Ascending aorta (tissue), 2 donors: ENCODE measurements at regions of chr14 and their contacts with region 1.

Region 1: DNA sequence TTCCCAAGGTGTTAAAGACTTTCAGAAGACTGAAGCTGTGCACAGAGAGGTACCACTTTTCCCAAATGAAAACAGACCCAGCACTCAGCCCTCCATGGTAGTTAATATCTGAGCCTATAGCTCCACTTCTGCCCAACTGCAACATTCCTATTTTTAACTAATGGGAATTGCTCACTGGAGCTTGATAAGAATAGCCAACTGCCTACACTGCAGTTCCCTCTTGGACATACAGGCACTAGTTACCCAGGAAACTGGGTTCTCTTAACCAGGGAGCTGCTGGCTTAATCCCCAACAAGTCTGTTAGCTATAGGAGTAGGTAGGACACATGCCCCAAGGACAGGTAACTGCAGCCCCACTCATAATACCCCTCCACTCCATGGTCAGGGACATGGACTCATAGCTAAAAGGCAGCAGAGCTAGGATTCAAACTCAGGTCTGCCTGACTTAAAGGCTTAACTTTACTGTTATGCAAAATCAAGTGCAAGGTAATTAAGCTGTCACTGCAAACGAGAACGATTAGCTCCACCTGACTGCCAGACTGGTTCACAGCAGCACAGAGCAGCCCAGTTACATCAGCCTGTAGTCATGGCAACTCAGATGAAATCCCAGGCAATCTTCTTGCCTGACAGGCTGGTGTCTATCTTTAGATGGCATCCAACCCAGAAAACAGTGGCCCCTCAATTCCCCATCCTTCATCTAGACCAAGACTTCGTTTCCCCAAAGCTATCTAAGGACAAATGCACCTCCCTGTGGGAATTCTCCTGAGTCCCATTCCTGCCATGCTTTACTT is 77.1 kb upstream of the ACTN1 start:
- DNase-seq: no peak
- H3K4me3 ChIP-seq: no peak overlapping the region
- H3K27ac ChIP-seq: peak overlapping the region; percentile 69 to 92
- H3K4me1 ChIP-seq: peaks cover 6 to 42% of the 10 kb centered on the region in 2 donors
- H3K27me3 ChIP-seq: no peaks in the 10 kb centered on the region
- CTCF ChIP-seq: no peak

Region 2: DNA sequence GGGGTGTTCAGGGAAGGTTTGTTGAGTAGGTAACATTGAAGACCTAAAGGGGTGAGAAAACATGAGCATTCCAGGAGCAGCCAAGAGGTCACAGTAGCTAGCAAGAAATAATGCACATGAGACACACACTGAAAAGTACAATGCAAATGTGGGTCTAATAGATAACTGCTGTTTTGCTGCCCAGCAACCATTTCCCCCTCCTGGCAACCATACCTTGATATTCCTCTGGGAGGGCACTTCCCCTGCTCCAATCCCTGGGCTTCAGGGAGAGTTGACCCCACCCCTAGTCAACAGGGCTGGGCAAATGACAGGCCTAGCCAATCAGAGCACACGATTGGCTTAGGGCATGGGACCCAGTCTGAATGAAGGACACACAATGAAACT is 68.5 kb before region 1 on chr14:
- intact Hi-C with region 1: no loop called
- DNase-seq: no peak
- H3K4me3 ChIP-seq: no peak overlapping the region
- H3K27ac ChIP-seq: no peak overlapping the region
- H3K4me1 ChIP-seq: peaks cover 0 to 3% of the 10 kb centered on the region in 2 donors
- H3K27me3 ChIP-seq: no peaks in the 10 kb centered on the region
- CTCF ChIP-seq: no peak

Region 3: DNA sequence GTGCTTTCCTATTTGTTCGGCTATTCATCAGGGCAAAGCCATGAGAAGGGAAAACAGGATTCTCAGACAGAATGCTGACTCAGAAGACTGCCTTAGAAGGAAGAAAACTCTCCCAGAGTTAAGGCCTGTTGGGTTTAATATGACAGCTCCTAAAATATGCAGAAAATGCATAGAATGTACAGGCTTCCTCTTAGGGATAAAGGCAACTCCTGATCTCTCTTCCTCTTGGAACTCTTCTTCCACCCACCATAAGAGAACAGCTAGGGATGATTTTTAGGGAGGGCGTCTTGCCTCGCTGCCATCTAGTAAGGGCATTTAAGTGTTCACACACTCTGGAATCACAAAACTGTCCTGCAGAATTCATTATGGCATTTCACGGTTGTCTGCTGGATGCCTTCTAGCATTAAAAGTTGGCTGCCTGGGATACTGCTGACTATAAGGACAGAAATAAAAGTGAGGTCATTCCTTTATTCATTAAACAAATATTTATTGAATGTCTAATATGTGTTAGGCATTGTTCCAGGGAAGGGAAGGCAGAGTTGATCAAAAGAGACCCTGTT is 23.1 kb after region 1 on chr14:
- intact Hi-C with region 1: loop called (anchors 2 kb)
- DNase-seq: no peak
- H3K4me3 ChIP-seq: no peak overlapping the region
- H3K27ac ChIP-seq: peak overlapping the region; percentile 89 to 90
- H3K4me1 ChIP-seq: peaks cover 9 to 27% of the 10 kb centered on the region in 2 donors
- H3K27me3 ChIP-seq: no peaks in the 10 kb centered on the region
- CTCF ChIP-seq: no peak